IMR-90 (cell line): ENCODE measurements at regions of chr15 and their contacts with region 1.

Region 1: DNA sequence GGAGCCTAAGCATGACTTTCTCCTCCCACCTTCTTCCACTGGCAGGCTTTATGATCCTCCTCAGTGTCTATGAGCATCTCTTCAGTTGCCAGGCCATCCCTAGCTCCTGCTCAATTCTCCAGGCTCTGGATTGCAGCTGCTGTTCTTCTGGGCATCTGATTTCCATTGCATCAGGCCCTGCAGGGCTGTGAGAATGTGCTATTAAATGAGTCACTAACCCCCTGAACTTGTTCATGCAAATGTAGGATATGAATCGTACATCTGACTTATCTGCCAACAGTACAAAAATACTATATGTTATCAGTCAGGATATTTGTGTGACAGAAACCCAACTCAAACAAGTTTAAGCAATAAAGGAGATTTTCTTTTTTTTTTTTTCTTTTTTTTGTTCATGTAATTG is 11.9 kb downstream of the GPR176 start:
- DNase-seq: peak; percentile 96
- ATAC-seq: peak; percentile 95
- H3K4me3 ChIP-seq: no peak overlapping the region
- H3K27ac ChIP-seq: peak overlapping the region; percentile 51; the same call in 1 of the 2 replicates
- H3K4me1 ChIP-seq: peaks cover 29% of the 10 kb centered on the region
- H3K27me3 ChIP-seq: no peaks in the 10 kb centered on the region
- CTCF ChIP-seq: no peak
- POLR2A ChIP-seq: no peak
- RAD21 ChIP-seq: no peak

Region 2: GRCh38 chr15:39804026-39804425 is 104.2 kb before region 1 on chr15:
- CTCF ChIA-PET with region 1: no interaction called
- POLR2A ChIA-PET with region 1: no interaction called
- dilution Hi-C with region 1: no loop called
- in situ Hi-C with region 1: no loop called
- intact Hi-C with region 1: no loop called
- DNase-seq: peak; percentile 51
- ATAC-seq: no peak
- H3K4me3 ChIP-seq: no peak overlapping the region
- H3K27ac ChIP-seq: no peak overlapping the region
- H3K4me1 ChIP-seq: peaks cover 3% of the 10 kb centered on the region; the same call in 1 of the 2 replicates
- H3K27me3 ChIP-seq: no peaks in the 10 kb centered on the region
- CTCF ChIP-seq: no peak
- POLR2A ChIP-seq: no peak
- RAD21 ChIP-seq: no peak

Region 3: DNA sequence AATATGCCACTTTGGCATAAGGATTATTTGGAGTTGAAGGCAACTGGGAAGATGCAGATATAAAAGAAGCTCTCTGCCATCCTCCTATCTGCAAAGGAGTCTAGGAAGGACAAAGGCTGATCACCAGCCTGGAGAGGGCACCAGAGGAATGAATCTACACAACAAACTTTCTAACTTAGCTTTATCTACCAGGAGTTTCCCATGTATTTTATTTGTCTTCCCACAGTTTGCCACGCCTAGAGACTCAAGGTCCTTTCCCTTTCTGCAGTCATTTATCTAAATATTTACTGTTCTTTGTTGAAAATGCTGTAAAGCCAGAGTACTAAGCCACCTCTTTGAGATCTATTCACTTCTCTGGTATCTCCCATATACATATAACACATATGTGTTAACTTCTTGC is 20.4 kb before region 1 on chr15:
- CTCF ChIA-PET with region 1: interaction called, 10 read pairs
- POLR2A ChIA-PET with region 1: no interaction called
- dilution Hi-C with region 1: no loop called
- in situ Hi-C with region 1: no loop called
- intact Hi-C with region 1: no loop called
- DNase-seq: peak; percentile 50
- ATAC-seq: peak; percentile 88
- H3K4me3 ChIP-seq: no peak overlapping the region
- H3K27ac ChIP-seq: no peak overlapping the region
- H3K4me1 ChIP-seq: peaks cover 22% of the 10 kb centered on the region
- H3K27me3 ChIP-seq: no peaks in the 10 kb centered on the region
- CTCF ChIP-seq: peak; percentile 44
- POLR2A ChIP-seq: no peak
- RAD21 ChIP-seq: peak; percentile 35